ENCODE measurements at regions of chr10 and their contacts with region 1.

Region 1: DNA sequence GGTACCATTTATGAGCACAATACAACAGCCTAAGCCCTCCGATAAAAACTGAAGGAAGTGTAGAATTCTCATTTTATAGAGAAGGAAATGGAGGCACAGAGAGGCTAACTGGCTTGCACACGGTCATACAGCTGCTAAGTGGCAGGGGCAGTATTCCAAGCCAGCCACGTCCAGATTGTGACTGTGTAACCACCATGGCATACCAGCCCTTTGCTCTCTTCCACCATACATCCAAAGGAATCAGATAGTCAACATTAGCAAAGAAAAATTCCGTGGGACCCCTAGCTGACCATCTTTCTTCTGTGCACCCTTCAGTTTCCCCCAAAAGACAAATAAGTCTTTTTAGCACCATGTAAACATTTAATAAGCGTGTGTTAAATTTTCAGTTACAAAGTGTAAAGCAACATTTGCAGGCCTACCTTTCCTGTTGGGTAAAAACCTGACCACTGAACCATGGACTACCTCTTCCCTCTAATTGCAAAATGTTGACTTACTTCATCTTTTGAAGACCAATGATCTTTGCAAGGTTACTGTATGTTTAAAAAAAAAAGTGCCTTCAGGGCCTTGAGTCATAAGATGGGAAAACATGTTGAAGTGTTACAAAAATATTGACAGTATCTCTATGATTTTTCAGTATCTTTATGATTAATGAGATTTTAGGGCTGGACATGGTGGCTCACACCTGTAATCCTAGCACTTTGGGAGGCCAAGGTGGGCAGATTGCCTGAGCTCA is 24.3 kb upstream of the PDZD8 start:
- DNase-seq: no peak
- H3K4me3 ChIP-seq: no peak overlapping the region
- H3K27ac ChIP-seq: no peak overlapping the region
- H3K4me1 ChIP-seq: no peaks in the 10 kb centered on the region
- H3K27me3 ChIP-seq: no peaks in the 10 kb centered on the region
- CTCF ChIP-seq: no peak
- EP300 ChIP-seq: no peak
- POLR2A ChIP-seq: no peak

Region 2: GRCh38 chr10:117431160-117431559 is 31.7 kb after region 1 on chr10:
- in situ Hi-C with region 1: no loop called
- intact Hi-C with region 1: no loop called
- DNase-seq: no peak
- H3K4me3 ChIP-seq: no peak overlapping the region
- H3K27ac ChIP-seq: no peak overlapping the region
- H3K4me1 ChIP-seq: no peaks in the 10 kb centered on the region
- H3K27me3 ChIP-seq: no peaks in the 10 kb centered on the region
- CTCF ChIP-seq: no peak
- EP300 ChIP-seq: no peak
- POLR2A ChIP-seq: no peak

Region 3: DNA sequence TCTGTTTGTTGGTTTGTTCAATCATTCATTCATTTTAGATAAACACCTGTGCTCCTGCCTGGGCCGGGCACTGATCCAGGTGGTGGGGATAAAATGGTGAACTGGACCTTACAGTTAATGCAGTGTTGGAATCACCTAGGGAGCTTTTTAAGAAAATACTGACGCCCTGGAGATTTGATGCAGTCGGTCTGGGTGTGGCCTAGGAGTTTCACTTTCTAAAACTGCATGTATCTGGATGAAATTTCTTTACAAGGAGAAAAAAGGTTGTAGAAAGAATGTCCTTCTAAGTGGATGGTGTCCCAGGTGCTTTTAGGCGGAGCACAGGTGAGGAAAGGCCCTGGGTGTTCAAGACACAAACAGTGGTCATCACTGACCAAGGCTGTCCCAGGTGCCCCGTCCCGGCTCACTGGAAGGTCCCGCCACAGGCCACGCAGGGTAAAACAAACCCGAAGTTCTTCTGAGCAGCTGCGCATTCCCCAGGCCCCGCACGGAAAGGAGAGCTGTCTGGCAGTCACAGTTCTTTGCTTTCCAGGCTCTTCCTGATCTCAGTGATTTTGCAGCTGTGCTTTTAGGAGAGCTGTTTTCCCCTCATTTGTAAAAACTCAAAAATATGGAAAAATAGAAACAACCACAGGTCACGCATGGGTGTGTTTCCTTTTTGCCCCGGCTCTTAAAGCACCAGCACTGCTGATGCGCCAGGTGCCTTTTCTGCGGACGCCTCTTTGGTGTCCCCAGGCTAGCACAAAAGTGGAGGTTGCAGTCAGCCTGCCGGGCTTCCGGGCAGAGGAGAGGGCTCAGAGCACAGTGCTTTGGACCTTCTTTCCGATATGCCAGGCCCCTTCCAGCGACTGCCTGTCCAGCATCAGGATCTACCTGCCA is 1969.7 kb after region 1 on chr10:
- in situ Hi-C with region 1: no loop called
- intact Hi-C with region 1: loop called (anchors 5 kb)
- DNase-seq: peak; percentile 30
- H3K4me3 ChIP-seq: no peak overlapping the region
- H3K27ac ChIP-seq: peak overlapping the region; percentile 55 to 71 (median 68)
- H3K4me1 ChIP-seq: peaks cover 5 to 31% (median 13%) of the 10 kb centered on the region in 4 donors
- H3K27me3 ChIP-seq: no peaks in the 10 kb centered on the region
- CTCF ChIP-seq: no peak
- EP300 ChIP-seq: no peak
- POLR2A ChIP-seq: no peak

Measured in transverse colon (tissue), 4 donors.